ENCODE measurements at regions of chr2 and their contacts with region 1.

Region 1: GRCh38 chr2:30336978-30337841 is 105.9 kb downstream of the LBH start:
- DNase-seq: peak; percentile 80
- ATAC-seq: peak; percentile 89
- H3K4me3 ChIP-seq: peak overlapping the region; percentile 29 to 62 (median 42)
- H3K4me3 Mint-ChIP-seq: peak overlapping the region; percentile 81
- H3K27ac ChIP-seq: peak overlapping the region; percentile 89 to 90
- H3K27ac Mint-ChIP-seq: peak overlapping the region; percentile 99
- H3K4me1 ChIP-seq: peaks cover 93 to 94% of the 10 kb centered on the region in 2 donors
- H3K4me1 Mint-ChIP-seq: peaks cover 92% of the 10 kb centered on the region
- H3K27me3 ChIP-seq: no peaks in the 10 kb centered on the region
- H3K27me3 Mint-ChIP-seq: no peaks in the 10 kb centered on the region
- CTCF ChIP-seq: no peak

Region 2: DNA sequence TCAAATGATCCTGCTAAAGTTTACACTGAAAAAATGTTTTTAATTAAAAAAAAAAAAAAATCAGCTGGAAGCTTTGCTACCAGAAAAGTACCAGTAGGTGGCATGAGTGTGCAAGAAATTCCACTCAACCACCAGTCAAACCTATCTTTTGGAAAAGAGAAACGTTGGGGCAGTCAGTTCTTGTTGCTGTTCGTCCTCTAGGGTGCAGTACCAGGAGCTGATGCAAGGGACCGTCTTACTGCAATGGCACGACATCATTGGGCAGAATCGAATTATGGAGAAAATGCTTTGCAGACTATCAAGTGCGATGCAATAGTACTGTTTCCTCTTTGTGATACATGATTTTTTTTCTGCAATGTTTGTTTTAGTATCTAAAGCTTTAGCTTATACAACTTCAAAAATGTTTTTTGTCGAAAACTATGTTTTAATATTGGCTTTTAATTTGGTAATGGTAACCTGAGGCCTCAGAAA is 172.1 kb before region 1 on chr2:
- CTCF ChIA-PET with region 1: interaction called, 23 read pairs
- POLR2A ChIA-PET with region 1: no interaction called
- intact Hi-C with region 1: no loop called
- DNase-seq: peak; percentile 87
- ATAC-seq: peak; percentile 100
- H3K4me3 ChIP-seq: no peak overlapping the region
- H3K4me3 Mint-ChIP-seq: no peak overlapping the region
- H3K27ac ChIP-seq: no peak overlapping the region
- H3K27ac Mint-ChIP-seq: no peak overlapping the region
- H3K4me1 ChIP-seq: peaks cover 8% of the 10 kb centered on the region in 2 donors
- H3K4me1 Mint-ChIP-seq: peaks cover 16% of the 10 kb centered on the region
- H3K27me3 ChIP-seq: no peaks in the 10 kb centered on the region
- H3K27me3 Mint-ChIP-seq: no peaks in the 10 kb centered on the region
- CTCF ChIP-seq: peak; percentile 85

Region 3: DNA sequence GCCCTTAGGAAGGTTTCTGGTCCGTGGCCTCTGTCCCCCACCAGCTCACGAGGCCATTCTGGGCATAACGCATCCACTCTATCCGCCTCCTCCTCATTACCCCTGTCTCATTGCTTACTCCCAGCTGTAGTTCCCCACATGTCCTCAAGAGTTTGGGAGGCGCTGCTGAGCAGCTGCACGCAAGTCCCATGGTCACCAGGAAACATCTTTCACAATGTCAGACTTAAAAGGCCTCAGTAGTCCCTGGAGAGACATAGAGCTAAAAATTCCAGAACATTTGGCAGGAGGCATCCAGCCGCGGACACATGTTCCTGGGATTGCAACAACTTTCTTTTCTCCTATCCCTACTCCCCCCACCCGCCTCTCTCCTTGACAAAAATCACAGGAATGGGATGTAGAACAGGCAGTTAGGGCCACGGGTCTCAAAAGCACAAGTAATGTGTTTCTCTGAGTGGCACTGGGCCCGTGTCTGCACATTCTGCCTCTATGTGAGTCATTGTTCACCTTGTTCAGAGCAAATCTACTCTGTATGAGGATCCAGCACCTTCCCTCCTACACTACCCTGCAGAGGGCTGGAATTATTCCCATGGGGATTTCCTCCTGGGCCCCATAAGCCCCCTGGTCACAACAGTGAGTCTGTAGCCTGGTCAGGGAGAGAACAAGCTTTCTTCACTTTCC is 97.8 kb before region 1 on chr2:
- CTCF ChIA-PET with region 1: interaction called, 55 read pairs
- POLR2A ChIA-PET with region 1: no interaction called
- intact Hi-C with region 1: no loop called
- DNase-seq: peak; percentile 79
- ATAC-seq: peak; percentile 71
- H3K4me3 ChIP-seq: no peak overlapping the region
- H3K4me3 Mint-ChIP-seq: peak overlapping the region; percentile 35
- H3K27ac ChIP-seq: peak overlapping the region in 1 of 2 donors; percentile 94
- H3K27ac Mint-ChIP-seq: peak overlapping the region; percentile 62
- H3K4me1 ChIP-seq: peaks cover 73 to 79% of the 10 kb centered on the region in 2 donors
- H3K4me1 Mint-ChIP-seq: peaks cover 87% of the 10 kb centered on the region
- H3K27me3 ChIP-seq: no peaks in the 10 kb centered on the region
- H3K27me3 Mint-ChIP-seq: no peaks in the 10 kb centered on the region
- CTCF ChIP-seq: peak; percentile 88

Region 4: GRCh38 chr2:30287857-30288513 is 49.2 kb before region 1 on chr2:
- CTCF ChIA-PET with region 1: interaction called, 22 read pairs
- POLR2A ChIA-PET with region 1: interaction called, 12 read pairs
- intact Hi-C with region 1: loop called (anchors 1 kb)
- DNase-seq: peak; percentile 77
- ATAC-seq: peak; percentile 85
- H3K4me3 ChIP-seq: peak overlapping the region; percentile 19 to 69 (median 34)
- H3K4me3 Mint-ChIP-seq: peak overlapping the region; percentile 58
- H3K27ac ChIP-seq: peak overlapping the region; percentile 81 to 86
- H3K27ac Mint-ChIP-seq: peak overlapping the region; percentile 84
- H3K4me1 ChIP-seq: peaks cover 83 to 91% of the 10 kb centered on the region in 2 donors
- H3K4me1 Mint-ChIP-seq: peaks cover 82% of the 10 kb centered on the region
- H3K27me3 ChIP-seq: no peaks in the 10 kb centered on the region
- H3K27me3 Mint-ChIP-seq: no peaks in the 10 kb centered on the region
- CTCF ChIP-seq: no peak

Region 5: DNA sequence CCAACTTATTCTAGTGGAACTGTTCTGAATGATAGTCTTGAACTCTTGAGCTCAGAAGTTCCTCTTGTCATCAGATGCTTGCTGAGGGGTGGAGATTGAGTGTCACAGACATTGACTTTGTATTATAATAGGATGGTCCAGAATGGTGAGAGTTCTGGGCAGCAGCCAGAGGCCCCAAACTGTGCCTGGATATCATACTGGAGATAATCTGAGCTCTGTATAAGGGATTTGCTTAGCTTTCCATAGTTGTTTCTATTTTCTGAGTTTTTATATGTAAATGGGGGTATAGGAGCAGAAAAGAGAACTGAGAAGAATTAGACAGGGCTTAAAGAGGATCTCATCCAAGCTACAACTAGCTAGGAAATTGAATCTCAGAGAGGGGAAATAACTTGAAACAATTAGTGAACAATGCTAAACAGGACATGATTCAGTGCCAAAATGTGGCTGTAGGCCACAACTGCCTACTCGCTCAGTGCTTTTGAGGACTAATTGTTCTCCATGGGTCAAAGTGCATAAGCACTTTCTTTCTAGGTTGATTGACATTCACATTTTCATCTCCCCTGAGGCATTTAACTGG is 99.7 kb after region 1 on chr2:
- CTCF ChIA-PET with region 1: interaction called, 11 read pairs
- POLR2A ChIA-PET with region 1: no interaction called
- intact Hi-C with region 1: no loop called
- DNase-seq: peak; percentile 68
- ATAC-seq: peak; percentile 83
- H3K4me3 ChIP-seq: no peak overlapping the region
- H3K4me3 Mint-ChIP-seq: peak overlapping the region; percentile 66
- H3K27ac ChIP-seq: peak overlapping the region; percentile 70 to 78
- H3K27ac Mint-ChIP-seq: peak overlapping the region; percentile 90
- H3K4me1 ChIP-seq: peaks cover 28 to 39% of the 10 kb centered on the region in 2 donors
- H3K4me1 Mint-ChIP-seq: peaks cover 32% of the 10 kb centered on the region
- H3K27me3 ChIP-seq: no peaks in the 10 kb centered on the region
- H3K27me3 Mint-ChIP-seq: no peaks in the 10 kb centered on the region
- CTCF ChIP-seq: no peak

Measured in B cell (primary cell).